Lower leg skin (tissue), 4 donors: ENCODE measurements at regions of chr12 and their contacts with region 1.

Region 1: GRCh38 chr12:22544038-22544979 is at the start of gene C2CD5:
- DNase-seq: peak; percentile 96 to 99
- H3K4me3 ChIP-seq: peak within 1 kb of the TSS; percentile 55
- CTCF ChIP-seq: peak in 1 of 3 donors; percentile 34
- POLR2A ChIP-seq: no peak
- total RNA-seq, gene C2CD5: 19.3 to 22.6 (median 19.9) TPM

Region 2: GRCh38 chr12:22624870-22625761 is 80.8 kb after region 1 on chr12 and contains the start of gene ETNK1:
- intact Hi-C with region 1: loop called (anchors 5 kb)
- DNase-seq: peak; percentile 92 to 99
- H3K4me3 ChIP-seq: peak within 1 kb of the TSS; percentile 76
- CTCF ChIP-seq: no peak
- POLR2A ChIP-seq: peak in 1 of 2 donors; percentile 96
- total RNA-seq, gene ETNK1: 21.1 to 35.1 (median 23.4) TPM